Astrocyte of the cerebellum (primary cell): ENCODE measurements at regions of chr19 and their contacts with region 1.

Region 1: GRCh38 chr19:44796701-44797115 is 12.2 kb upstream of the BCAM start:
- DNase-seq: no peak
- H3K4me3 ChIP-seq: no peak overlapping the region
- CTCF ChIP-seq: no peak

Region 2: GRCh38 chr19:44839276-44839675 is 42.6 kb after region 1 on chr19:
- in situ Hi-C with region 1: loop called (anchors 5 kb)
- DNase-seq: no peak
- H3K4me3 ChIP-seq: no peak overlapping the region
- CTCF ChIP-seq: no peak

Region 3: GRCh38 chr19:44869733-44870470 is 73.2 kb after region 1 on chr19:
- in situ Hi-C with region 1: no loop called
- DNase-seq: peak; percentile 93
- H3K4me3 ChIP-seq: no peak overlapping the region
- CTCF ChIP-seq: no peak